Thyroid gland (tissue), 4 donors: ENCODE measurements at regions of chr1 and their contacts with region 1.

Region 1: DNA sequence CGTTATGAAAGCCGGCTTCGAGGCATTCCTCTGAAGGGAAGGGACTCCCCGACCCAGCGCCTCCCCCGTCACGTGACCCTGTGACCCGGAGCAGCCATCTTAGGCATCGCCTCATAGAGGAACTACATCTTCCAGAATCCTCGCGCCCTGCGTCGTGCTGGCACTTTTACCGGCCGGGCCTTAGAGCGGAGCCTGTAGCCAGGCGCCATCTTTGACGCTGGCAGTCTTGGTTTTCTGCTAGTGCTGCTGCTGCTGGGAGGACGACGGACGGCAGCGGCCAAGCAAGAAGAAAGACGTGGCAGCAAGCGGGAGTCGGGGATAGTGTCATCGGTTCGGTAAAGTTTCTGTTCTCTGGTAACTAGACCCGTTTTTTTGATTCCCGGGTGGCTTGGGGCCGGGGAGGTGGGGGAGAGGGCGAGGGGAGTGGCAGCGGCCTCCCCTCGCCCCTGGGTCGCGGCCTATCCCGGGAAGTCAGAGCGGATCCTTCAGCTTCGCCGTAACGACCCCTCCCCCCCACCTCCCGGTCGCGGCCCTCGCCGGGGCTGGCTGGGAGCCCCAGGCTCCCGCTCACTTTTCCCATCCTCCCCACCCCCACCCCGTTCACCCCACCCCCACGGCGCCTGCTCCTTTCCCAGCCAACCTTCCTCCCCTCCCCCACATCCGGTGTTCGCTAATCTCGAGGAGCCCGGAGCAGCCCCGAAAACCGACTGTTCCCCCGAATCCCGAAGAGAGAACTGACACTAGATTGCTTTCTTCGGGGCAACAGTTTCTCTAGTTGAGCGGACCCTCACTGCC is at the starts of genes ZBED6 and ZC3H11A:
- DNase-seq: peak; percentile 100
- H3K4me3 ChIP-seq: peak within 1 kb of the TSS; percentile 45 to 66 (median 62)
- H3K27ac ChIP-seq: peak within 1 kb of the TSS; percentile 88 to 94 (median 94)
- H3K4me1 ChIP-seq: peaks cover 29 to 41% of the 10 kb centered on the region in 2 donors
- H3K27me3 ChIP-seq: no peaks in the 10 kb centered on the region
- CTCF ChIP-seq: no peak
- POLR2A ChIP-seq: peak in 1 of 2 donors; percentile 77
- total RNA-seq, gene ZBED6: 17.6 to 33.2 (median 28.5) TPM
- total RNA-seq, gene ZC3H11A: 108 to 166 (median 131) TPM

Region 2: GRCh38 chr1:203898458-203899244 is 103.0 kb after region 1 on chr1:
- intact Hi-C with region 1: no loop called
- DNase-seq: no peak
- H3K4me3 ChIP-seq: no peak overlapping the region
- H3K27ac ChIP-seq: no peak overlapping the region
- H3K4me1 ChIP-seq: no peaks in the 10 kb centered on the region
- H3K27me3 ChIP-seq: no peaks in the 10 kb centered on the region
- CTCF ChIP-seq: no peak
- POLR2A ChIP-seq: no peak

Region 3: GRCh38 chr1:204149635-204150565 is 354.3 kb after region 1 on chr1:
- intact Hi-C with region 1: loop called (anchors 10 kb)
- DNase-seq: peak; percentile 39 to 54
- H3K4me3 ChIP-seq: no peak overlapping the region
- H3K27ac ChIP-seq: peak overlapping the region in 1 of 3 donors; percentile 35
- H3K4me1 ChIP-seq: peaks cover 13 to 20% of the 10 kb centered on the region in 2 donors
- H3K27me3 ChIP-seq: no peaks in the 10 kb centered on the region
- CTCF ChIP-seq: no peak
- POLR2A ChIP-seq: no peak